Activated naive CD4-positive, alpha-beta T cell treated with anti-CD3 and anti-CD28 coated beads for 36 hours (primary cell): ENCODE measurements at regions of chr3 and their contacts with region 1.

Region 1: DNA sequence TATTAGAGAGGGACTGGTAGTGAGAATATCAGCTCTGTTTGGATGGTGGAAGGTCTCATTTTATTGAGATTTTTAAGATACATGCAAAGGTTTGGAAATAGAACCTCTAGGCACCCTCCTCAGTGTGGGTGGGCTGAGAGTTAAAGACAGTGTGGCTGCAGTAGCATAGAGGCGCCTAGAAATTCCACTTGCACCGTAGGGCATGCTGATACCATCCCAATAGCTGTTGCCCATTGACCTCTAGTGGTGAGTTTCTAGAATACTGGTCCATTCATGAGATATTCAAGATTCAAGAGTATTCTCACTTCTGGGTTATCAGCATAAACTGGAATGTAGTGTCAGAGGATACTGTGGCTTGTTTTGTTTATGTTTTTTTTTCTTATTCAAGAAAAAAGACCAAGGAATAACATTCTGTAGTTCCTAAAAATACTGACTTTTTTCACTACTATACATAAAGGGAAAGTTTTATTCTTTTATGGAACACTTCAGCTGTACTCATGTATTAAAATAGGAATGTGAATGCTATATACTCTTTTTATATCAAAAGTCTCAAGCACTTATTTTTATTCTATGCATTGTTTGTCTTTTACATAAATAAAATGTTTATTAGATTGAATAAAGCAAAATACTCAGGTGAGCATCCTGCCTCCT is 87.2 kb downstream of the TGFBR2 start:
- DNase-seq: peak; percentile 51
- H3K4me3 Mint-ChIP-seq: no peak overlapping the region
- H3K27ac Mint-ChIP-seq: peak overlapping the region; percentile 76
- H3K4me1 Mint-ChIP-seq: peaks cover 69% of the 10 kb centered on the region
- H3K27me3 Mint-ChIP-seq: no peaks in the 10 kb centered on the region

Region 2: GRCh38 chr3:30042274-30042859 is 651.2 kb before region 1 on chr3:
- CTCF ChIA-PET with region 1: no interaction called
- intact Hi-C with region 1: loop called (anchors 5 kb)
- DNase-seq: peak; percentile 84
- H3K4me3 Mint-ChIP-seq: no peak overlapping the region
- H3K27ac Mint-ChIP-seq: no peak overlapping the region
- H3K4me1 Mint-ChIP-seq: no peaks in the 10 kb centered on the region
- H3K27me3 Mint-ChIP-seq: peaks cover 29% of the 10 kb centered on the region

Region 3: GRCh38 chr3:30199096-30199759 is 494.4 kb before region 1 on chr3:
- CTCF ChIA-PET with region 1: interaction called, 12 read pairs
- intact Hi-C with region 1: loop called (anchors 2 kb)
- DNase-seq: peak; percentile 89
- H3K4me3 Mint-ChIP-seq: no peak overlapping the region
- H3K27ac Mint-ChIP-seq: no peak overlapping the region
- H3K4me1 Mint-ChIP-seq: peaks cover 6% of the 10 kb centered on the region
- H3K27me3 Mint-ChIP-seq: no peaks in the 10 kb centered on the region

Region 4: GRCh38 chr3:30437171-30437601 is 256.4 kb before region 1 on chr3:
- CTCF ChIA-PET with region 1: no interaction called
- intact Hi-C with region 1: loop called (anchors 2 kb)
- DNase-seq: no peak
- H3K4me3 Mint-ChIP-seq: no peak overlapping the region
- H3K27ac Mint-ChIP-seq: no peak overlapping the region
- H3K4me1 Mint-ChIP-seq: peaks cover 26% of the 10 kb centered on the region
- H3K27me3 Mint-ChIP-seq: no peaks in the 10 kb centered on the region

Region 5: DNA sequence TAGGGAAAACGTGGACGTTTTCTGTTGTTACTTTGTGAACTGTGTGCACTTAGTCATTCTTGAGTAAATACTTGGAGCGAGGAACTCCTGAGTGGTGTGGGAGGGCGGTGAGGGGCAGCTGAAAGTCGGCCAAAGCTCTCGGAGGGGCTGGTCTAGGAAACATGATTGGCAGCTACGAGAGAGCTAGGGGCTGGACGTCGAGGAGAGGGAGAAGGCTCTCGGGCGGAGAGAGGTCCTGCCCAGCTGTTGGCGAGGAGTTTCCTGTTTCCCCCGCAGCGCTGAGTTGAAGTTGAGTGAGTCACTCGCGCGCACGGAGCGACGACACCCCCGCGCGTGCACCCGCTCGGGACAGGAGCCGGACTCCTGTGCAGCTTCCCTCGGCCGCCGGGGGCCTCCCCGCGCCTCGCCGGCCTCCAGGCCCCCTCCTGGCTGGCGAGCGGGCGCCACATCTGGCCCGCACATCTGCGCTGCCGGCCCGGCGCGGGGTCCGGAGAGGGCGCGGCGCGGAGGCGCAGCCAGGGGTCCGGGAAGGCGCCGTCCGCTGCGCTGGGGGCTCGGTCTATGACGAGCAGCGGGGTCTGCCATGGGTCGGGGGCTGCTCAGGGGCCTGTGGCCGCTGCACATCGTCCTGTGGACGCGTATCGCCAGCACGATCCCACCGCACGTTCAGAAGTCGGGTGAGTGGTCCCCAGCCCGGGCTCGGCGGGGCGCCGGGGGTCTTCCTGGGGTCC is 87.1 kb before region 1 on chr3 and contains the start of gene TGFBR2:
- CTCF ChIA-PET with region 1: interaction called, 13 read pairs
- intact Hi-C with region 1: no loop called
- DNase-seq: peak; percentile 90
- H3K4me3 Mint-ChIP-seq: peak within 1 kb of the TSS; percentile 94
- H3K27ac Mint-ChIP-seq: peak within 1 kb of the TSS; percentile 100
- H3K4me1 Mint-ChIP-seq: peaks cover 52% of the 10 kb centered on the region
- H3K27me3 Mint-ChIP-seq: no peaks in the 10 kb centered on the region
- total RNA-seq, gene TGFBR2: 57.8 to 58.1 TPM

Region 6: GRCh38 chr3:30658328-30659052 is 35.1 kb before region 1 on chr3:
- CTCF ChIA-PET with region 1: interaction called, 12 read pairs
- intact Hi-C with region 1: no loop called
- DNase-seq: peak; percentile 62
- H3K4me3 Mint-ChIP-seq: peak overlapping the region; percentile 62
- H3K27ac Mint-ChIP-seq: peak overlapping the region; percentile 97
- H3K4me1 Mint-ChIP-seq: peaks cover 98% of the 10 kb centered on the region
- H3K27me3 Mint-ChIP-seq: no peaks in the 10 kb centered on the region

Region 7: GRCh38 chr3:30729512-30729911 is 35.9 kb after region 1 on chr3:
- CTCF ChIA-PET with region 1: interaction called, 6 read pairs
- intact Hi-C with region 1: loop called (anchors 2 kb)
- DNase-seq: no peak
- H3K4me3 Mint-ChIP-seq: no peak overlapping the region
- H3K27ac Mint-ChIP-seq: no peak overlapping the region
- H3K4me1 Mint-ChIP-seq: peaks cover 39% of the 10 kb centered on the region
- H3K27me3 Mint-ChIP-seq: no peaks in the 10 kb centered on the region

Region 8: GRCh38 chr3:30970183-30970582 is 276.6 kb after region 1 on chr3:
- CTCF ChIA-PET with region 1: no interaction called
- intact Hi-C with region 1: no loop called
- DNase-seq: no peak
- H3K4me3 Mint-ChIP-seq: no peak overlapping the region
- H3K27ac Mint-ChIP-seq: no peak overlapping the region
- H3K4me1 Mint-ChIP-seq: no peaks in the 10 kb centered on the region
- H3K27me3 Mint-ChIP-seq: peaks cover 4% of the 10 kb centered on the region